Adrenal gland (tissue), 19 donors: ENCODE measurements at regions of chr1 and their contacts with region 1.

Region 1: DNA sequence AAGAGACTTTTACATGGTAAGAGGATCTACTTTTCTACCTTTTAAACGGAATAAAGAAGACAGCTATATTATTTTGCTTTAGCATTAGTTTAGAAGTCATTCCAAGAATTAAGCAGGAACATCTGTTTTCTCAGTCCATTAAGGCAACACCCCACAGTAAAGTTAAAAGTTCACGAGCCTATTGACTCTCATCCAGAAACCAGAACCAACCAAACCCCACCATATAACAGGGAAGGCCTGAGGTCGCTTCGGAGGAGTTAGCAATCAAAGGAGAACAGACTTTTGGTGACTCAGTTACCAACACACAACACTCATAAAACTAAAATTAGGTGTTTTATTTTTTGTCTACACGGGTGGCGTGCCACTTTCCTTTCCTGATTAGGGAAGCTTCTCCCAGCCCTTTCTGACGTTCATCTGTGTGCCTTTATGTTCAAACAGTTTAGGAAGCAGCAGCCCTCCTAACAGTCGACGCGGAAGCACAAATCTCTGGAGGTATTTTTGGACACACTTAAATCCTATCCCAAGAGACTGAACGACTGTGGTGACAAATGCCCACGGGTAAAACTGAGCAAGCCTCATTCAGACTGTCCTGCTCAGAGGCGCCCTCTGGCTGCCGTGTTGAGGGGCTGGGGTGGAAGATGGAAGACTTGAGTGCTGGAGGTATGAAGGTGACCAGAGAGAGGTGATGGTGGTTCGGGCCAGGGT is 8.6 kb upstream of the PLA2G2C start:
- DNase-seq: peak; percentile 61 to 86 (median 77)
- H3K4me3 ChIP-seq: peak overlapping the region in 1 of 4 donors; percentile 17
- H3K27ac ChIP-seq: no peak overlapping the region
- H3K4me1 ChIP-seq: peaks cover 0 to 10% of the 10 kb centered on the region in 2 donors
- H3K27me3 ChIP-seq: no peaks in the 10 kb centered on the region
- CTCF ChIP-seq: peak; percentile 64 to 87 (median 80)
- POLR2A ChIP-seq: no peak

Region 2: DNA sequence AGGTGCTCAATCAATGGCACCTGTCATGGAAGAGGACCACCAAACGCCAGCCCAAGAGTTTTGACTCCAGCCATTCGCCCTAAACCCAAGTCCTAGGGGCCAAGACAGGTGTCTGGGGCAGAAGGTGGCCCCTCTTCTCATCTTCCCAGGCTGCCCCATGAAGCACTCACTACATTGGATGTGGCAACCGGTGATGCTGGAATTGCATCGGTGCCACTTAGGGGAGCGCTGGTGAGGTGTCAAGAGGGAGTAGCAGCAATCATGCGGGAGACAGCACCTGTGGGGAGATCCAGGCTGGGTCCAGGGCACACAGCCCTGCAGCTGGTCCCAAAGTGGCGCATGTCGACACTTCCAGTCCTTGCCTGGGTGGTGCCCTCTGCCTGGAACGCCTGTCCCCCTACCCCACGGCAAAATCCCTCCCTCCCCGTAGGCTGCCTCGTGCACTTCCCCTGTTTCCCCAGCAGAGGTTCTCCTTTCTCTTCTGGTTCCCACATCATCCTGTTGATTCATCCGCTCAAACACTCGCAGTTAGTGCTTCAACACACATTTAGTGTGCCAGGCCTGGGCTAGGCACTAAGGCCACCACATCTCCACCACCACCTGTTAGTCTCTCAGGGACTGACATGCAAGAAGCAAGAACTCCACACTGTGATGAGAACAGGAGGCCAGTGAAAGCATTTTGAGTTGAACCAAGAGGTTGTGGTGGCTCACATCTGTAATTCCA is 94.1 kb before region 1 on chr1:
- intact Hi-C with region 1: loop called in 1 of 2 experiments (anchors 10 kb)
- DNase-seq: peak; percentile 48 to 67 (median 61)
- H3K4me3 ChIP-seq: no peak overlapping the region
- H3K27ac ChIP-seq: no peak overlapping the region
- H3K4me1 ChIP-seq: no peaks in the 10 kb centered on the region
- H3K27me3 ChIP-seq: peaks cover 6% of the 10 kb centered on the region
- CTCF ChIP-seq: peak; percentile 76 to 91 (median 82)
- POLR2A ChIP-seq: no peak